ENCODE measurements at regions of chr2 and their contacts with region 1.

Region 1: GRCh38 chr2:196277002-196277401 is 105.6 kb upstream of the STK17B start:
- DNase-seq: no peak
- ATAC-seq: peak; percentile 31
- H3K4me3 Mint-ChIP-seq: peak overlapping the region; percentile 11
- H3K27ac Mint-ChIP-seq: peak overlapping the region; percentile 52
- H3K4me1 Mint-ChIP-seq: peaks cover 42% of the 10 kb centered on the region
- H3K27me3 Mint-ChIP-seq: no peaks in the 10 kb centered on the region

Region 2: GRCh38 chr2:196239622-196240587 is 37.1 kb before region 1 on chr2:
- CTCF ChIA-PET with region 1: interaction called, 25 read pairs
- DNase-seq: peak; percentile 96
- ATAC-seq: peak; percentile 66
- H3K4me3 Mint-ChIP-seq: peak overlapping the region; percentile 71
- H3K27ac Mint-ChIP-seq: peak overlapping the region; percentile 100
- H3K4me1 Mint-ChIP-seq: peaks cover 83% of the 10 kb centered on the region
- H3K27me3 Mint-ChIP-seq: no peaks in the 10 kb centered on the region

Measured in activated CD8-positive, alpha-beta memory T cell treated with anti-CD3 and anti-CD28 coated beads, Interleukin-2, amount 10 ng/mL, durations not matched to agents 7 days and 5 days (primary cell).